Transverse colon (tissue), 4 donors: ENCODE measurements at regions of chr1 and their contacts with region 1.

Region 1: GRCh38 chr1:111227851-111228747 is 586 bp downstream of the CHI3L2 start:
- DNase-seq: no peak
- H3K4me3 ChIP-seq: no peak overlapping the region
- H3K27ac ChIP-seq: peak overlapping the region in 2 of 4 donors; percentile 36 to 38
- H3K4me1 ChIP-seq: peaks cover 0 to 15% (median 0%) of the 10 kb centered on the region in 4 donors
- H3K27me3 ChIP-seq: no peaks in the 10 kb centered on the region
- CTCF ChIP-seq: no peak
- EP300 ChIP-seq: no peak
- POLR2A ChIP-seq: no peak

Region 2: DNA sequence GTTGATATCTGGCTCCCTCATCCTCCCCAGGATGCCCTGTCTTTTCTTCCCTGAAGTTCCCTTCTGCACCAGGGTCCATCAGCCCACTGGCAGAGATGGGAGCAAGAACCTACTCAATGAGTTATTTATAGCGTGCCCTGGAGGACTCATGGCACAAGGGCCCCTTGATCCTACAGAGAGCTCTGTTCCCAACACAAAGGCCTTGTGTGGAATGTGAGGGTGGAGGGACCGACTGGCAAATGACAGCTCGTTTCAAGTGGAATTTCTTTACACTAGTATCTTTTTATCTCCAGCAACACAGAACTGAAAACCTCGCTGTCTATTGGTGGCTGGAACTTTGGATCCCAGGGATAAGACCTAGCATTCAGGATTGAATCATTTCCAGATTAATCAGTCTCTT is 21.9 kb after region 1 on chr1:
- in situ Hi-C with region 1: no loop called
- intact Hi-C with region 1: loop called (anchors 1 kb)
- DNase-seq: no peak
- H3K4me3 ChIP-seq: no peak overlapping the region
- H3K27ac ChIP-seq: no peak overlapping the region
- H3K4me1 ChIP-seq: no peaks in the 10 kb centered on the region
- H3K27me3 ChIP-seq: no peaks in the 10 kb centered on the region
- CTCF ChIP-seq: no peak
- EP300 ChIP-seq: no peak
- POLR2A ChIP-seq: no peak

Region 3: GRCh38 chr1:111789666-111790316 is 561.7 kb after region 1 on chr1:
- in situ Hi-C with region 1: loop called in 1 of 4 experiments (anchors 25 kb)
- intact Hi-C with region 1: no loop called
- DNase-seq: no peak
- H3K4me3 ChIP-seq: no peak overlapping the region
- H3K27ac ChIP-seq: peak overlapping the region in 1 of 4 donors; percentile 24
- H3K4me1 ChIP-seq: no peaks in the 10 kb centered on the region
- H3K27me3 ChIP-seq: peaks cover 6% of the 10 kb centered on the region
- CTCF ChIP-seq: peak in 1 of 5 experiments; percentile 18
- EP300 ChIP-seq: no peak
- POLR2A ChIP-seq: no peak